Dorsolateral prefrontal cortex (tissue), 120 donors: ENCODE measurements at regions of chr12 and their contacts with region 1.

Region 1: GRCh38 chr12:94101738-94102660 is 46.4 kb upstream of the PLXNC1 start:
- DNase-seq: peak; percentile 69 to 93 (median 86)
- H3K4me3 ChIP-seq: peak overlapping the region; percentile 39 to 86 (median 66)
- H3K27ac ChIP-seq: peak overlapping the region in 19 of 59 donors; percentile 3 to 81 (median 48)
- H3K27me3 ChIP-seq: peaks cover 0 to 14% (median 0%) of the 10 kb centered on the region in 45 donors
- CTCF ChIP-seq: peak; percentile 57 to 94 (median 88)

Region 2: DNA sequence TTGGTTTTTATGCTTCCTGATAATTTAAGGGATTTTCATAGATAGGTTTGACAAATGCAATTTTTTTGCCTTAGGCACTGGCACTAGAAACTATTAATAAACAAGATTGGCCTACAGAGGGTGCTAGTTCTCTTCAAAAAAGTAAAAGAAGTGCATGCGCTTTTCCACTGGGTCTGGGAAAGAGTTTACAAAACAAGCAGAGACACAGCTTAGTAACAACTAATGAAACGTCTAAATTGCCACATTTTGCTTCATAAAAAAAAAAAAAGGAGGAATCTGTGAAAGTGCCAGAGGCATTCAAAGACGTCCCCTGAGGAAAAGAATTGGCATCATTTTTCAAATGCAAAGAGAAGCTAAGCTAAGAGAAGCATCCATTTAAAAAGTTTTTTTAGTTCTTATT is 1114.6 kb before region 1 on chr12:
- intact Hi-C with region 1: loop called in 1 of 2 experiments (anchors 5 kb)
- DNase-seq: peak in 1 of 10 donors; percentile 23
- H3K4me3 ChIP-seq: peak overlapping the region in 1 of 59 donors; percentile 2
- H3K27ac ChIP-seq: peak overlapping the region in 3 of 59 donors; percentile 4 to 31 (median 11)
- H3K27me3 ChIP-seq: no peaks in the 10 kb centered on the region
- CTCF ChIP-seq: peak; percentile 63 to 94 (median 79)

Region 3: DNA sequence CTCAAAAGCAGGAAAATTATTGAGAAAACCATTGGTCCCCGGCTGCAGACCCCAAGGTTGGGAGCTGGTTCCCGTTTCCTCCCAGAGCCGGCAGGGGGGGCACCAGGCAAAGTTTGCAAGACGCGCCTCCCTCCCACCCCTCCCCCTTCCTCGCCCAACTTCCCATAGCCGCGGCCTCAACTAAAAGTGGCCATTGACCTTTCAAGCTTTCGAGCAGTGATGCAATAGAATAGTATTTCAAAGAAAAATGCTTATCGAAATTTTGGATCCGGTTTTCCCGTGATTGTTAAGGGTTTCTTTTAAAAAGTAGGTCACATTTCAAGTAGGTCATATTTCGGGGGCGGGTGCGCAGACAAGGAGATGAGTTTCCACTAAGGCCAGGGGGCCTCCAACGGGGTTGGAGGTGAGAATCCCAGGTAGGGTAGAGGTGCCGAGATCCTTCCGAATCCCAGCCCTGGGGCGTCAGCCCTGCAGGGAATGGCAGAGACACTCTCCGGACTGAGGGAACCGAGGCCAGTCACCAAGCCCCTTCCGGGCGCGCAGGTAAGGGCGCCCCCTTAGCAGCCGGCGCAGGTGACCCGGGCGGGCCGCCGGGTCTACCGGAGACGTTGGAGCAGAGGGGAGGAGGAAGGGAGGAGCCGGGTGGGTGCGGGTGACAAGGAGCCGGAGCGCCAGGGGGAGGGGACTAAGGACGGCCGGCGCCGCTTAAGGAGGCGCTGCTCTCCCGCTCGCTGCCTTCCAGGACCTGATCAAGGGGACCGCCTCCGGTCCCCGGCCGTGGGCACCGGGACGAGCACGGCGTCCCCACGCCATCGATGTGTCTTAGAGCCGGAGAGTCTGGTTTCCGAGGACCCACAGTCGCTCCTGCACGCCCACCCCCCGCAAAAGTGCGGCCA is 532.1 kb before region 1 on chr12:
- intact Hi-C with region 1: loop called (anchors 1 to 2 kb)
- DNase-seq: peak; percentile 37 to 81 (median 70)
- H3K4me3 ChIP-seq: peak overlapping the region; percentile 56 to 93 (median 77)
- H3K27ac ChIP-seq: peak overlapping the region in 58 of 59 donors; percentile 15 to 90 (median 80)
- H3K27me3 ChIP-seq: peaks cover 0 to 31% (median 7%) of the 10 kb centered on the region in 45 donors
- CTCF ChIP-seq: peak; percentile 64 to 95 (median 82)

Region 4: DNA sequence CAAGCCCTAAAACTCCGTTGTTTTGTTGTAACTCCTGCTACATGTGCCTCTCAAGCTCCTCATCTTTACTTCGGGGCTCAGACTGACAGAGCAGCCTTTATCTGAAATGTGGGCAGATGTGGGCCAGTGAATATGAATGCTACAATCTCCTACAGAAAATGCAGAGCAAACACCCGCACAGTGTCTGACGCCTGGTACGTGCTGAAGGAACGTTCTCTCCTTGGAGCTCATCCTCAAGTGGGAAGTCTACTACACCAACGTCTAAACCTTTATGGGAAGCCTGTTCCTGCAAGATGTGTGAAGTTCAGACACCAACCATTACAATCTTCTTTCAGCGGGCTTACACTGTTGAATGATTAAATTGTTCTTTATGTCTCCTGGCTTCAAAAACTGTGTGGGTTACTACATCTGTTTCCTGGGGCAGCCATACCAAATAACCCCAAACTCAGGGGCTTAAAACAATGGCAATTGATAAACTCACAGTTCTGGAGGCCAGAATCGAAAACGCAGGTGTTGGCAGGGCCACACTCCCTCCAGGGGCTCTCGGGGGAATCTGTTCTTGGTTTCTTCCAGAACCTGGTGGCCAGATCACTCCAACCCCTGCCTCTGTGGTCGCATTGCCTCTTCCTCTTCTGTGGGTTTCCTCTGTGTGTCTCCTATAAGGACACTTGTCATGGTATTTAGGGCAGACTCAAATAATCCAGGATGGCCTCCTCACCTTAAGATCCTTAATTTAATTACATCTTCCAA is 133.3 kb before region 1 on chr12:
- intact Hi-C with region 1: loop called in 1 of 2 experiments (anchors 10 kb)
- DNase-seq: peak in 3 of 10 donors; percentile 61 to 74 (median 69)
- H3K4me3 ChIP-seq: no peak overlapping the region
- H3K27ac ChIP-seq: peak overlapping the region in 2 of 59 donors; percentile 6 to 26
- H3K27me3 ChIP-seq: no peaks in the 10 kb centered on the region
- CTCF ChIP-seq: no peak

Region 5: GRCh38 chr12:93990832-93991803 is 110.9 kb before region 1 on chr12:
- intact Hi-C with region 1: loop called in 1 of 2 experiments (anchors 5 kb)
- DNase-seq: peak in 9 of 10 donors; percentile 13 to 75 (median 62)
- H3K4me3 ChIP-seq: peak overlapping the region in 27 of 59 donors; percentile 0 to 39 (median 13)
- H3K27ac ChIP-seq: peak overlapping the region in 34 of 59 donors; percentile 3 to 74 (median 40)
- H3K27me3 ChIP-seq: no peaks in the 10 kb centered on the region
- CTCF ChIP-seq: peak in 53 of 56 donors; percentile 10 to 68 (median 53)